Common myeloid progenitor, CD34-positive (primary cell): ENCODE measurements at regions of chr3 and their contacts with region 1.

Region 1: DNA sequence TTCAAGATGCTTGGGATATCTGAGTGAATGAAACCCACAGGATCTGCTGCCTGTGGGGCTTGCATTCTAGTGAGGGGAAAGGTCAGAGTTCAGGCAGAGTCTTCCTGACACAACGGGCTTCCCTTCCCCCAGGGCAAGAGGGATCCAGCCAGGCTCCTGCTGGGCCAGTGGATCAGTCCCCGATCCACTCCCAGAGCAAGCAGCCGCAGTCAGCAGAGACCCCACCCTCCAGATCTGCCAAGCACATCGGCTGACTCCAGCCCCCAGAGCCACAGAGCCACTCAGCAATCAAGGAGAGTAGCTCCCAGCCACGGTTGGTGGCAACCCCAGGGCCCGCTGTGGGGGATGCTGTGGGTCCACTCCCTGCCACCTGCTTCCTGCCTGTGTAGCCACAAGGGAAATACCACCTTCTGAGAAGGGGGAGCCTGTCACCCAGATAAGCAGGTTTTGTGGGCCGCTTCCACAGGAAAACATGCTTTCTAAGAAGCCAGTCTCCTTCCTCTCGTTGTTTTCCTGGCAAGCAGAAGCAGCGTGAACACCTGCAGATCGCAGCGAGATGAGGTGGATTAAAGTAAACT is 44.9 kb downstream of the CPN2 start:
- DNase-seq: peak; percentile 98 to 100 (median 99)
- H3K4me3 ChIP-seq: peak overlapping the region in 3 of 7 experiments; percentile 34 to 63 (median 51)
- H3K27ac ChIP-seq: peak overlapping the region; percentile 3 to 74
- H3K4me1 ChIP-seq: peaks cover 17 to 79% (median 57%) of the 10 kb centered on the region in 4 experiments
- H3K27me3 ChIP-seq: peaks cover 0 to 5% (median 1%) of the 10 kb centered on the region in 5 experiments

Region 2: GRCh38 chr3:194134757-194135528 is 171.3 kb before region 1 on chr3:
- CTCF ChIA-PET with region 1: interaction called, 6 read pairs
- POLR2A ChIA-PET with region 1: interaction called, 12 read pairs
- DNase-seq: peak; percentile 91 to 97 (median 95)
- H3K4me3 ChIP-seq: peak overlapping the region in 6 of 7 experiments; percentile 28 to 71 (median 64)
- H3K27ac ChIP-seq: peak overlapping the region in 1 of 2 experiments; percentile 68
- H3K4me1 ChIP-seq: peaks cover 16 to 62% (median 59%) of the 10 kb centered on the region in 4 experiments
- H3K27me3 ChIP-seq: peaks cover 0 to 63% (median 22%) of the 10 kb centered on the region in 5 experiments

Region 3: GRCh38 chr3:194141415-194142155 is 164.6 kb before region 1 on chr3:
- CTCF ChIA-PET with region 1: interaction called, 3 read pairs
- POLR2A ChIA-PET with region 1: interaction called, 12 read pairs
- DNase-seq: peak; percentile 64 to 84 (median 79)
- H3K4me3 ChIP-seq: peak overlapping the region in 6 of 7 experiments; percentile 44 to 70 (median 57)
- H3K27ac ChIP-seq: peak overlapping the region in 1 of 2 experiments; percentile 81
- H3K4me1 ChIP-seq: peaks cover 21 to 61% (median 55%) of the 10 kb centered on the region in 4 experiments
- H3K27me3 ChIP-seq: peaks cover 0 to 32% (median 0%) of the 10 kb centered on the region in 5 experiments

Region 4: DNA sequence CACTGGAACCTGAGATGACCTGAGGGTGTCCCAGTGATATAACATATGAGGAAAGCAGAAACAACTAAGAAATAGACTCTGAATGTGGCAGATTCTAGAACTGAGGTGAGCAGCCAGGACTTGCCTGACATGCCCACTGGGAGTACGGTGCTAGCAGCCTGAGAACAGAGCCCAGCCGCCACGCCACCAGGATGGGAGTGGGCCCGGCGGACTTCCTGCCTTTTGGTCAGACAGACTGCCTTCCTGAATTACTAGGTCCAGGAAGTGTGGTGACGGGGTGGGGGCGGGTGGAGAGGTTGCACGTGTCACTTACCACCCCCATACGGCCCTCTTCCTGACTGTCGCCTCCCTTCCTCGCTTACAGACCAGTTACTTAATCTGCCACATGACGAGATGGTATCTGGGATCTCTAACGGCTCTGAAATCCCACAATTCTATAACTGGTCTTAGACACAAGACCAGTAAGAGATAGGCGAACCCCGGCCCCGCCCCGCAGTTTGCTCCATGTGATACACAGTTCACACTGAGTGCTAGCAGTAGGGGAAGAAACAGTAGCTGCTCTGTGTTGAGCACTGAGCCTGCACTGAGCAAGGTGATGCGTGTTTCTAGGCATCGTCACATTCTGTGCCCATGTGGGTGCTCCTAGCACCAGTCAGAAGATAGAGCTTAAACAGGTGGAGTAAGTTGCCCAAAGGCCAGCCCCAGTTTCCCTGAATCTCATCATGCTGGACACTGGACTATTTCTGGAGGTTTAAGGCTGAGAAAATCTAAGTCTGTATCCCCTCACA is 50.8 kb before region 1 on chr3:
- CTCF ChIA-PET with region 1: no interaction called
- POLR2A ChIA-PET with region 1: interaction called, 11 read pairs
- DNase-seq: peak; percentile 83 to 92 (median 87)
- H3K4me3 ChIP-seq: peak overlapping the region in 4 of 7 experiments; percentile 10 to 57 (median 38)
- H3K27ac ChIP-seq: peak overlapping the region in 1 of 2 experiments; percentile 73
- H3K4me1 ChIP-seq: peaks cover 7 to 60% (median 38%) of the 10 kb centered on the region in 4 experiments
- H3K27me3 ChIP-seq: no peaks in the 10 kb centered on the region